Spleen (tissue), 13 donors: ENCODE measurements at regions of chr6 and their contacts with region 1.

Region 1: DNA sequence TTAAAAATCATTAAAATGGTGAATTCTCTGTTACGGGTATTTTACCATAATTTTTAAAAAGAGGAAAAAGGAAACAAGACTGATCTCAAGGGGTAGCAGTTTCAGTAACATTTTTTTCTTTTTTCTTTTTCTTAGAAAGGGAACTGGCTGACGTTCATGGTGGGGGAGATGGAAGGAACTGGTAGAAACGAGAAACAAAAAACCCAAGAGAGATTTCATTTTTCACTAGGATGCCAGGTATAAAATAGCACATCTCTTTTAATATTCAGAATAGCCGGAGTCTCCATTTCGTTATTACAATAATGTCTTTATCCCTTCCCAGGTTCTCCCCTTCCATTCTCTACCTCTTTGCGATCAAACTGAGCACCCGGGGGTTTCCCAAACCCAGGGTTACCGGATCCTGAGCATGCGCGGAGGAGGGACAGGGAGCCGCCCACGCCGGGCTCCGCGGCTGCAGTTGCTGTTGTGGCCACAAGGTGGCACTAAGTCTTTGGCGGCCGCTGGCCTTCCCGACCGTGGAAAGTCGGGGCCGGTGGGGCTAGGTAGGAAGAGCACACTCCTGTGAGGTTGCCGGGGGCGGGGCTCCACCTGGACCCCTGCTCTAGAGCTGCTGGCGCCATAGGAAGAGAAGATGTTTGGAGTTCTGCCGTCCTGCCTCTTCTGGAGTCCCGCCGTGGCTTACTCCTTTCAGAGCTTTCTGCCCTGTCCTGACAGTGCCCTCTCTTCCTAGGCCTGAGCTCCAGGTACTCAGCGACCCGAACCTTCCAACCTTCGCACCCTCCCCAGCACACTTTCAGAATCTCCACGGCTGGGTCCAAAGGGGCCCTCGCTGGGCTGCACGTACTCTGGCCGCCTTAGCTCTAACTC is 146.8 kb downstream of the SH3BGRL2 start:
- DNase-seq: peak; percentile 94
- H3K4me3 ChIP-seq: peak overlapping the region in 7 of 8 donors; percentile 20 to 64 (median 24)
- H3K27ac ChIP-seq: peak overlapping the region in 2 of 8 donors; percentile 22 to 26
- H3K4me1 ChIP-seq: peaks cover 5 to 14% (median 11%) of the 10 kb centered on the region in 6 donors
- H3K27me3 ChIP-seq: no peaks in the 10 kb centered on the region
- CTCF ChIP-seq: peak; percentile 82 to 100 (median 98)
- POLR2A ChIP-seq: no peak

Region 2: DNA sequence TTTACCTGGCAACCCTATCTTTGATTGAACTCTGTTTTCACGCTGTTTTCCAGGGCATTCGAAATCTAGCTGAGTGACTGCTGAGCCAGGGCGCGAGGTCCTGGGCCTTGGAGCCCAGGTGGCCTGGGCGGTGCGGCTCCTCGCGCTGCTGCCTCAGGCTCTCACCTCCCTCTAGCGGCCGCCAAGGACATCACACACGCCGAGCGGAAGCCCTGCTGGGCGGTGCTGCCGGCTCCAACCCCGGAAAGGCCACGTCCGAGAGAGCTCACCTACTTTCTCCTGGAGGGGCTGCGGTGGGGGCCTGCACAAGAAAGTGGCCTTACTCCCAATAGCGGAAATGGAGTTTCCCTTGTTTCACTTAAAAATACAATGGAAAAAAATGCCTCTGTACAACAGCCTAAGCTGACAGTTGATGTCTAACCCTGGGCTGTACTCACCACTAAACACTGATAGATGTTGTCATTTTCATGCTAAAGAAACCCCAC is 91.7 kb after region 1 on chr6:
- intact Hi-C with region 1: loop called (anchors 5 kb)
- DNase-seq: peak; percentile 96
- H3K4me3 ChIP-seq: peak overlapping the region in 4 of 8 donors; percentile 2 to 51 (median 18)
- H3K27ac ChIP-seq: peak overlapping the region in 1 of 8 donors; percentile 22
- H3K4me1 ChIP-seq: peaks cover 0 to 21% (median 14%) of the 10 kb centered on the region in 6 donors
- H3K27me3 ChIP-seq: no peaks in the 10 kb centered on the region
- CTCF ChIP-seq: peak; percentile 54 to 97 (median 87)
- POLR2A ChIP-seq: no peak

Region 3: GRCh38 chr6:80126657-80127345 is 348.9 kb after region 1 on chr6:
- intact Hi-C with region 1: no loop called
- DNase-seq: no peak
- H3K4me3 ChIP-seq: no peak overlapping the region
- H3K27ac ChIP-seq: no peak overlapping the region
- H3K4me1 ChIP-seq: no peaks in the 10 kb centered on the region
- H3K27me3 ChIP-seq: no peaks in the 10 kb centered on the region
- CTCF ChIP-seq: no peak
- POLR2A ChIP-seq: no peak